Esophagus muscularis mucosa (tissue), 4 donors: ENCODE measurements at regions of chr5 and their contacts with region 1.

Region 1: GRCh38 chr5:177500685-177501522 is 3.5 kb upstream of the PDLIM7 start:
- DNase-seq: peak; percentile 95
- H3K4me3 ChIP-seq: no peak overlapping the region
- H3K27ac ChIP-seq: peak overlapping the region; percentile 12 to 69 (median 54)
- H3K4me1 ChIP-seq: peaks cover 23 to 38% (median 34%) of the 10 kb centered on the region in 4 donors
- H3K27me3 ChIP-seq: no peaks in the 10 kb centered on the region
- CTCF ChIP-seq: peak; percentile 94 to 97 (median 95)
- EP300 ChIP-seq: no peak
- POLR2A ChIP-seq: no peak

Region 2: DNA sequence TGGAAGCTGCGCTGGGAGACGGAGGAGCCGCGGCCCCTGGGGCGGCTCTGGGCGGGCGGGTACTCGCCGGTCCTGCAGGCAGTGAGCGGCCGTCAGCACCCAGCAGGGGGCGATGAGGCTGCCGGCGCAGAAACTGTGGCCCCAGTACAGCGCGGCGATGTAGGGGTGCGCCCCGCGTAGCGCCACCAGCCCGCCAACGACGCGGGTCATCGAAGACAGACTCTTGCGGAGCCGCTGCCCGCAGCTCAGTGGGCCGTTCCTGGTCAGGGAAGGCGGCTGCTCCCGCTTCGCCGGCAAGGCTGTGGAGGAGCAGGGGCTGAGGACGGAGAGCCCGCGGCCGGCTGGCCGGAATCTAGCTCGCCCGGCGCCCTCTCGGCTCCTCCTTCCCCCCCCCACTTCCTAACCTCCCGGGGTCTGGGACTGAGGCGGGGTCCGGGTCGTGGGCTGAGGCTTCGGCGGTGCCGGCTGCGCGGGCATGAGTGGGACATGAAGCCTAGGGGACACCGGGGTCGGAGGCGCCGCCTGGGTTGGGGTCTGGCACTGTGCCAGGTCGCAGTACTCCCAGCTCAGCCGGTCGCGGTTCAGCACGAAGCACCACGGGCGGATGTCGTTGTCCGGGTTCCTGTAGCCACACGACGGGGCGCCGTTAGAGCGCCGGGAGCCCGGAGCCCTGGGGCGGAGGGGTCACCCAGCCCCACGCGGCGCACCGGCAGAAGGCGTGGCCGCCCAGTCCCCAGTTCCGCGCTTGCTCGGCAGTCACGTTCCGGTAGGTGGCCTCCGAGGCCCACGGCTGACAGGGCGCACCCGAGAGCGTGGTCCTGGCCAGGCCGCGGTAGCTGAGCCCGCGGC is 96.9 kb before region 1 on chr5:
- intact Hi-C with region 1: loop called (anchors 5 kb)
- DNase-seq: peak; percentile 94
- H3K4me3 ChIP-seq: peak overlapping the region; percentile 53 to 58 (median 57)
- H3K27ac ChIP-seq: no peak overlapping the region
- H3K4me1 ChIP-seq: peaks cover 34 to 48% (median 42%) of the 10 kb centered on the region in 4 donors
- H3K27me3 ChIP-seq: peaks cover 13 to 72% (median 49%) of the 10 kb centered on the region in 4 donors
- CTCF ChIP-seq: peak; percentile 62 to 83 (median 74)
- EP300 ChIP-seq: no peak
- POLR2A ChIP-seq: no peak

Region 3: GRCh38 chr5:177425801-177426565 is 74.9 kb before region 1 on chr5:
- intact Hi-C with region 1: loop called (anchors 2 kb)
- DNase-seq: peak; percentile 100
- H3K4me3 ChIP-seq: peak overlapping the region; percentile 52 to 74 (median 61)
- H3K27ac ChIP-seq: peak overlapping the region; percentile 89
- H3K4me1 ChIP-seq: peaks cover 28 to 49% (median 47%) of the 10 kb centered on the region in 4 donors
- H3K27me3 ChIP-seq: no peaks in the 10 kb centered on the region
- CTCF ChIP-seq: peak in 1 of 3 experiments; percentile 3
- EP300 ChIP-seq: no peak
- POLR2A ChIP-seq: peak; percentile 69